Naive thymus-derived CD4-positive, alpha-beta T cell (primary cell): ENCODE measurements at regions of chr17 and their contacts with region 1.

Region 1: DNA sequence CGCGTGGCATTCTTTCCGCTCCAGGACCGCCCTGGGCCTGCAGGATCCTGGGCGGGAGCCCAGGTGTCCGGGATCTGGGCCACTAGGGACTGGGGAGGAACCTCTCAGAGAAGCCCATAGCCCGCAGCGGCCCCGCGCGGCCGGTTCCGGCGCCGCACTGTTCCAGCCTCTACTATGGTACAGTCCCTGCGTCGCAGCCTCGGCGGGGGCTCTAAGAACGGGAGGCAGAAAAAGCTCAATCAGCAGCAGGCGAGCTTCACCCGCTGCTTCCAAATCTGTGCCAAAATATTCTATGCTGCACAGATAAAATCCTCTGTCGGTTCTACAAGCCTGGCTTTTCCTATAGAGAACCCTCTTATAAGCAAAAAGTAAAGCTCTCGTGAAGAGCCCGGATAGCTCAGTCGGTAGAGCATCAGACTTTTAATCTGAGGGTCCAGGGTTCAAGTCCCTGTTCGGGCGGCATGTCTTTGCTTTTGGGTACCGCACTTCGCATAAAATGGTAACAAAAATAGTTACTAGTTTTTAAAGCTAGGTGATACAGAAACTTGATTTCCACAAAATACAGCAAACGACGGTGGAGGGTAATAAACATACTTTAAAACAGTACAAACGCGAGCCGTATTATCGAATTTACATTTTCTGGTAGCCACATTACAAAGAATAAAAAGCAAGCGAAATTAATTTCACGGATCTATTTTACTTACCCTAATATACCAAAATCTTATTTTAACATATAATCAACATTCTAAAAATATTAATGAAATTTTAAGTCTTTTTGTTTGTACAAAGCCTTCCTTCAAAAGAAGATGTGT is 661 bp upstream of the ALOXE3 start:
- DNase-seq: peak; percentile 78 to 92 (median 90)
- ATAC-seq: peak; percentile 76
- H3K4me3 ChIP-seq: peak overlapping the region; percentile 95
- H3K4me3 Mint-ChIP-seq: peak overlapping the region; percentile 88 to 99 (median 94)
- H3K27ac ChIP-seq: peak overlapping the region; percentile 64
- H3K27ac Mint-ChIP-seq: peak overlapping the region; percentile 94 to 100 (median 99)
- H3K4me1 ChIP-seq: peaks cover 44 to 46% of the 10 kb centered on the region in 2 donors
- H3K4me1 Mint-ChIP-seq: peaks cover 27 to 61% (median 53%) of the 10 kb centered on the region in 7 donors
- H3K27me3 ChIP-seq: peaks cover 0 to 12% of the 10 kb centered on the region in 2 donors
- H3K27me3 Mint-ChIP-seq: peaks cover 9 to 77% (median 45%) of the 10 kb centered on the region in 5 donors

Region 2: DNA sequence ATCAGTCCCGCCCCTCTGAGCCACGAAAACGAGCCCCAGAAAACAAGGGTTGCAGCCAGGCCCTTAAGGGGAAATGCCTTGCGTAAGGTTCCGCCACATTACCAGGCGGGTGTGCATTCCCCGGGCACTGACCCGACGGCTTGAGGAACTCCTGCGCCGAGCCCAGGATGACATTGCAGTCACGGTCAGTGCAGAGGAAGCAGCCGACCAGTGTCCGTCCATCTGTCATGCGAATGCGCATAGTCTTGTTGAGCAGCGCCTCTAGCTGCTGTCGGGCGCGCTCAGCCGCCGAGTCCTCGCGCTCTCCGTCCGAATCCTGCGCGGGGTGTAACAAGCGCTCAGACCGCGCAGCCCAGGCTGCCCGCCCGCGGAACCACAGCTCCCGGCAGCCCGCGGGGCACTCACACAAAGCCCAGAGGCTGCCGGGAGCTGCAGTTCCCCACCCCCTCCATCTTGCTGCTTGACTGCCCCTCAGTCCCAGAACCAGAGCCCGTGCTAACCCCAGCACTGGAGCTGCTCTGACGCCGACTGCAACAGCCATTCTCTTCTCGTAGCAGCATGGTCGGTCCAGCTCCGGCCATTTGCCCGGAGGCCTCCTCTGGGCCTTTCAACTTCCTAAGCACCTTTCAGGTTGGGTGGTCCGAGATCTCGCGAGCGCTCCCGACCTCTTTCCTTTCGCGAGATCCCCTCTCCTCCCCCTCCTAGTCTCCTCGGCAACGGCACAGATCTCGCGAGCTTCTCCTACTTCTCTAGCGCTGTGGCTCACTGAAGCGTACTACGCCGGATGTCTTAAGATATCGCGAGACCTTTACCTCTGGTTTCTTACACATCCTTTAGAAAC is 261.9 kb before region 1 on chr17 and contains the start of gene NAA38:
- CTCF ChIA-PET with region 1: no interaction called
- POLR2A ChIA-PET with region 1: interaction called, 3 read pairs
- intact Hi-C with region 1: loop called in 1 of 2 experiments (anchors 1 kb)
- DNase-seq: peak; percentile 81 to 99 (median 97)
- ATAC-seq: peak; percentile 87
- H3K4me3 ChIP-seq: peak within 1 kb of the TSS; percentile 70
- H3K4me3 Mint-ChIP-seq: no peak within 1 kb of the TSS
- H3K27ac ChIP-seq: peak within 1 kb of the TSS; percentile 83
- H3K27ac Mint-ChIP-seq: no peak within 1 kb of the TSS
- H3K4me1 ChIP-seq: peaks cover 25 to 26% of the 10 kb centered on the region in 2 donors
- H3K4me1 Mint-ChIP-seq: peaks cover 0 to 16% (median 5%) of the 10 kb centered on the region in 7 donors
- H3K27me3 ChIP-seq: no peaks in the 10 kb centered on the region
- H3K27me3 Mint-ChIP-seq: no peaks in the 10 kb centered on the region
- total RNA-seq, gene NAA38: 22.1 to 63.8 (median 24.9) TPM

Region 3: GRCh38 chr17:7905421-7905820 is 213.6 kb before region 1 on chr17:
- CTCF ChIA-PET with region 1: no interaction called
- POLR2A ChIA-PET with region 1: no interaction called
- intact Hi-C with region 1: no loop called
- DNase-seq: no peak
- ATAC-seq: no peak
- H3K4me3 ChIP-seq: no peak overlapping the region
- H3K4me3 Mint-ChIP-seq: no peak overlapping the region
- H3K27ac ChIP-seq: peak overlapping the region; percentile 1
- H3K27ac Mint-ChIP-seq: peak overlapping the region in 5 of 9 donors; percentile 42 to 84 (median 73)
- H3K4me1 ChIP-seq: no peaks in the 10 kb centered on the region
- H3K4me1 Mint-ChIP-seq: peaks cover 0 to 14% (median 0%) of the 10 kb centered on the region in 7 donors
- H3K27me3 ChIP-seq: no peaks in the 10 kb centered on the region
- H3K27me3 Mint-ChIP-seq: no peaks in the 10 kb centered on the region

Region 4: GRCh38 chr17:8073627-8074484 is 45.1 kb before region 1 on chr17:
- CTCF ChIA-PET with region 1: interaction called, 20 read pairs
- POLR2A ChIA-PET with region 1: interaction called, 13 read pairs
- intact Hi-C with region 1: loop called (anchors 1 kb)
- DNase-seq: peak; percentile 64 to 86 (median 82)
- ATAC-seq: peak; percentile 91
- H3K4me3 ChIP-seq: peak overlapping the region; percentile 49
- H3K4me3 Mint-ChIP-seq: peak overlapping the region; percentile 84 to 95 (median 88)
- H3K27ac ChIP-seq: no peak overlapping the region
- H3K27ac Mint-ChIP-seq: peak overlapping the region in 7 of 9 donors; percentile 28 to 88 (median 53)
- H3K4me1 ChIP-seq: peaks cover 7 to 24% of the 10 kb centered on the region in 2 donors
- H3K4me1 Mint-ChIP-seq: peaks cover 7 to 28% (median 25%) of the 10 kb centered on the region in 7 donors
- H3K27me3 ChIP-seq: peaks cover 7 to 9% of the 10 kb centered on the region in 2 donors
- H3K27me3 Mint-ChIP-seq: peaks cover 20 to 61% (median 29%) of the 10 kb centered on the region in 5 donors

Region 5: DNA sequence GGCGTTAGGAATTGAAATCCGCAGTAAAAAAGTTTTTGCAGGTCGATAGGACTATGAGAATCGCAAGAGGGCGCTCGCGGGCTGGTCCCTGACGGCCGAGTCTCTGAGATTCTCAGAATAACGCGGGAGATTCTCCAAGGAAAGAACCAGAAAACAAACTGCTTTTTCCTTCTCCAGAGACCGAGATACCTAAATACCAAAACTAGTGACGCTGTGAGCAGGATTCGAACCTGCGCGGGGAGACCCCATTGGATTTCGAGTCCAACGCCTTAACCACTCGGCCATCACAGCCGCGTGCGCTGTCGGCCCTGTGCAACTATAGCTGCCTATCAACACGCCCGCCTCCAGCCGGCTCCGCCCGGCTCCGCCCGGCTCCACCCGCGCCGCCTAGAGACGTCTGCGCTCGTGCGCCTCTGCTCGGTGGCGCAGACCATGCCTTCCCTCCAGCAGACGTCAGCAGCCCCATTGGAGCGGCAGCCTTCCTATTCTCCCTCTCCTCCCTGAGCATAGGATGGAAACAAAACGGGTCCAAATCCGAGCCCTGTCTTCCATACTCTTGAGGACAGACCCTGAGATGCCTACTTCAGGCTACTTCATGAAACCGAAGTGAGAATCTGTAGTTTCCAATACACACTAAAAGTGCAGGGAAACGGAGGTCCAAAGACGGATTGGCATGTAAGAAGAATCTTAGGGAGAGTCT is 19.8 kb after region 1 on chr17:
- CTCF ChIA-PET with region 1: interaction called, 26 read pairs
- POLR2A ChIA-PET with region 1: interaction called, 22 read pairs
- intact Hi-C with region 1: loop called (anchors 1 kb)
- DNase-seq: peak; percentile 93 to 99 (median 98)
- ATAC-seq: peak; percentile 90
- H3K4me3 ChIP-seq: peak overlapping the region; percentile 76
- H3K4me3 Mint-ChIP-seq: no peak overlapping the region
- H3K27ac ChIP-seq: peak overlapping the region; percentile 84
- H3K27ac Mint-ChIP-seq: no peak overlapping the region
- H3K4me1 ChIP-seq: peaks cover 8 to 17% of the 10 kb centered on the region in 2 donors
- H3K4me1 Mint-ChIP-seq: peaks cover 0 to 5% (median 0%) of the 10 kb centered on the region in 7 donors
- H3K27me3 ChIP-seq: no peaks in the 10 kb centered on the region
- H3K27me3 Mint-ChIP-seq: peaks cover 0 to 11% (median 0%) of the 10 kb centered on the region in 5 donors

Region 6: GRCh38 chr17:8173056-8173870 is 54.3 kb after region 1 on chr17:
- CTCF ChIA-PET with region 1: interaction called, 3 read pairs
- POLR2A ChIA-PET with region 1: interaction called, 23 read pairs
- intact Hi-C with region 1: no loop called
- DNase-seq: peak; percentile 49 to 95 (median 91)
- ATAC-seq: peak; percentile 91
- H3K4me3 ChIP-seq: peak overlapping the region; percentile 57
- H3K4me3 Mint-ChIP-seq: peak overlapping the region; percentile 80 to 96 (median 90)
- H3K27ac ChIP-seq: peak overlapping the region; percentile 92
- H3K27ac Mint-ChIP-seq: peak overlapping the region; percentile 99 to 100 (median 100)
- H3K4me1 ChIP-seq: peaks cover 26 to 39% of the 10 kb centered on the region in 2 donors
- H3K4me1 Mint-ChIP-seq: peaks cover 33 to 60% (median 52%) of the 10 kb centered on the region in 7 donors
- H3K27me3 ChIP-seq: no peaks in the 10 kb centered on the region
- H3K27me3 Mint-ChIP-seq: no peaks in the 10 kb centered on the region

Region 7: DNA sequence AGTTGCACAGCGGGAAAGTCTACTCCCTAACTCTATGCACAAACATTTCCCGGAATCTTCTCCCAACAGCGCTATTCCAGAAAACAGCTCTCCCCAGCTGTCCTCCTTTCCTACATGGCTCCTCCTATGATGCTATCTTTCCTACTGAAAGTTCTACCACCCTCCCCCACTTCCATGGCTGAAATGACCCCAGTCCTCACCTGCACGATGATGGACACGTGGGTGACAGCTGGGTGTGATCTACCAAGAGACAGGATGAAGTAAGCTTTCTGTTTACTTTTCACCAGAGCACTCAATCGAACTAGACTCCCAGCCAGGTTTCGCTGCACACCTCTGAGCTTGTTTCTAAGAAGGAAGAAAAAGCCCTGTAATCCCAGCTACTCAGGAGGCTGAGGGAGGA is 118.2 kb after region 1 on chr17:
- CTCF ChIA-PET with region 1: no interaction called
- POLR2A ChIA-PET with region 1: no interaction called
- intact Hi-C with region 1: no loop called
- DNase-seq: no peak
- ATAC-seq: no peak
- H3K4me3 ChIP-seq: no peak overlapping the region
- H3K4me3 Mint-ChIP-seq: peak overlapping the region in 1 of 10 donors; percentile 23
- H3K27ac ChIP-seq: no peak overlapping the region
- H3K27ac Mint-ChIP-seq: peak overlapping the region in 3 of 9 donors; percentile 38 to 71 (median 43)
- H3K4me1 ChIP-seq: peaks cover 0 to 9% of the 10 kb centered on the region in 2 donors
- H3K4me1 Mint-ChIP-seq: peaks cover 3 to 59% (median 35%) of the 10 kb centered on the region in 7 donors
- H3K27me3 ChIP-seq: no peaks in the 10 kb centered on the region
- H3K27me3 Mint-ChIP-seq: no peaks in the 10 kb centered on the region

Region 8: DNA sequence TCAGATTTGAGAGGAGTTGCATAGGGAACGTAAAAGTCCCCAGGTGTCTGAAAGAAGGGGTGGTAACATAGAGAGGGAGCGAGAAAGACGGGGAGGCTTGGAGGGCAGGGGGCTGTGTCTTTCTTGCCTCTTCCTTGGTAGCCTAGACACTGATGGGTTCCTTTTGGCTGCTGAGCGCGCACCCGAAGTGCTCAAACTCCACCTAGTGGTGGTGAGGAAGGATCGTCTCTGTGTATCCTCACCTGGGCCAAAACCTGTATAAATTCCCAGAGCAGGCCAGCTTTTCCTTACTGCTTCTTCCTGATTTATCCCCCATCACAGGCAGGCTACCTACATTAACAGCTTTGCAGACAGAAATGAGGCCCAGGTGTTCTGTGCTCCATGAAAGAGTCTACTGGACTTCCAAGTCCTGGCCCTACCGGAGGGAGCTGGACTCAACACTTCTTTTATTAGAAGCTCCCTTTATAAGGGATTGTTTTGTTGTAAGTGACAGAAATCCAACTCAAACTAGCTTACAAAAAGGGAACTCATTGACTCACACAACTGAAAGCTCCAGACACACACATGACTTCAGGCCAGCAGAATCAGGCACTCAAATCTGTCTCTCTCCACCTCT is 181.8 kb after region 1 on chr17:
- CTCF ChIA-PET with region 1: interaction called, 12 read pairs
- POLR2A ChIA-PET with region 1: interaction called, 9 read pairs
- intact Hi-C with region 1: loop called (anchors 1 to 2 kb)
- DNase-seq: peak; percentile 33 to 80 (median 72)
- ATAC-seq: peak; percentile 95
- H3K4me3 ChIP-seq: no peak overlapping the region
- H3K4me3 Mint-ChIP-seq: peak overlapping the region in 1 of 10 donors; percentile 14
- H3K27ac ChIP-seq: no peak overlapping the region
- H3K27ac Mint-ChIP-seq: peak overlapping the region in 7 of 9 donors; percentile 6 to 80 (median 71)
- H3K4me1 ChIP-seq: peaks cover 3 to 9% of the 10 kb centered on the region in 2 donors
- H3K4me1 Mint-ChIP-seq: peaks cover 7 to 18% (median 14%) of the 10 kb centered on the region in 7 donors
- H3K27me3 ChIP-seq: no peaks in the 10 kb centered on the region
- H3K27me3 Mint-ChIP-seq: peaks cover 0 to 5% (median 0%) of the 10 kb centered on the region in 5 donors

Region 9: DNA sequence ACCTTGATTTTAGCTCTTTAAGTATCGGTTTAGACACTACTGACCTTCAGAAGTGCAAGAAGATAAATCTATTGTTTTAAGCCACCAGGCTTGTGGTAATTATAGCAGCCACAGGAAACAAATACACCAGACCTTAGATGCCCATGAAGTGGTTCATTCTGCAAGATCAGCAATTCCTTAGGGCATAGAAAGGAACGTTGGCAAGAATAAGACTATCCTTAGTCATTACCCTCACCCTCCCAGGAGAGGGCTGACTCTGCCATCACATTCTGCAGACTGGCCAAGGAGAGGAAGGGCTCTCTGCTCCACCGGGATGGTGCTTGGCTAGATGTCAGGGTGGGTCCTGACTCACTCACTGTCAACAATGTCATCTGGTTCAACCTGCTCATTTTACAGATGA is 302.6 kb after region 1 on chr17:
- CTCF ChIA-PET with region 1: no interaction called
- POLR2A ChIA-PET with region 1: no interaction called
- intact Hi-C with region 1: no loop called
- DNase-seq: no peak
- ATAC-seq: no peak
- H3K4me3 ChIP-seq: no peak overlapping the region
- H3K4me3 Mint-ChIP-seq: no peak overlapping the region
- H3K27ac ChIP-seq: no peak overlapping the region
- H3K27ac Mint-ChIP-seq: no peak overlapping the region
- H3K4me1 ChIP-seq: no peaks in the 10 kb centered on the region
- H3K4me1 Mint-ChIP-seq: peaks cover 0 to 4% (median 0%) of the 10 kb centered on the region in 7 donors
- H3K27me3 ChIP-seq: no peaks in the 10 kb centered on the region
- H3K27me3 Mint-ChIP-seq: peaks cover 11 to 60% (median 44%) of the 10 kb centered on the region in 5 donors